Astrocyte of the cerebellum (primary cell): ENCODE measurements at regions of chr4 and their contacts with region 1.

Region 1: DNA sequence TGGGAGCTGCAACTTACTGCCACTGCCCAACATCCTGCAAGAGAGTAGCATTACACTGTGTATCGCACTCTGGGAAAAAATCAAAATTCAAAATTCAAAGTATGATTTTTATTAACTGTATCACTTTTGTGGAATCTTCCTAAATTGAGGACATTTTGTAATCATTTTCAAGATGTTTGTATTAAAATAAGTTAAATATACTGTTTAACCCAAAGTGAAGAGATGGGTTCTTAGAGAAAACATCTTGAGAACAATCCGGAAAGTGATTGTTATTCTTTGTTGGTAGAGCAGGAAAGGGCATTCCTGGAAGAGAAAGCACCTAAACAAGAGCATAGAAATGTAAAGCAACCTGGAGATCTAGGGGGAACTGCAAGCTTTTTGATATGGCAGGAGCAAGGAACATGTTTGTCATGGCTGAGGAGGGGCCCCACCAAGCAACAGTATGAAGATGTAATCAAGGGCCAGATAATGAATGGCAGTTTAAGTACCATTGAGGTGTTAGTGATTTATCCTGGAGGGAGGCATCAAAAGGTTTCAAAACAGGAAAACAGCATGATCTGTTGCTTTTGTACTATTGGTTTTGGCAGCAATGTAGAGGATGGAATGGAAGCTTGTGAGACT is 14.1 kb upstream of the SEC24D start:
- DNase-seq: no peak
- H3K4me3 ChIP-seq: peak overlapping the region; percentile 20
- CTCF ChIP-seq: no peak

Region 2: GRCh38 chr4:118905566-118905965 is 55.6 kb after region 1 on chr4:
- in situ Hi-C with region 1: loop called (anchors 5 kb)
- DNase-seq: no peak
- H3K4me3 ChIP-seq: no peak overlapping the region
- CTCF ChIP-seq: no peak

Region 3: GRCh38 chr4:118918388-118918787 is 68.4 kb after region 1 on chr4:
- in situ Hi-C with region 1: no loop called
- DNase-seq: peak; percentile 86
- H3K4me3 ChIP-seq: no peak overlapping the region
- CTCF ChIP-seq: no peak